Activated naive CD8-positive, alpha-beta T cell treated with anti-CD3 and anti-CD28 coated beads, Interleukin-2, amount 10 ng/mL, durations not matched to agents 7 days and 5 days (primary cell): ENCODE measurements at regions of chr4 and their contacts with region 1.

Region 1: DNA sequence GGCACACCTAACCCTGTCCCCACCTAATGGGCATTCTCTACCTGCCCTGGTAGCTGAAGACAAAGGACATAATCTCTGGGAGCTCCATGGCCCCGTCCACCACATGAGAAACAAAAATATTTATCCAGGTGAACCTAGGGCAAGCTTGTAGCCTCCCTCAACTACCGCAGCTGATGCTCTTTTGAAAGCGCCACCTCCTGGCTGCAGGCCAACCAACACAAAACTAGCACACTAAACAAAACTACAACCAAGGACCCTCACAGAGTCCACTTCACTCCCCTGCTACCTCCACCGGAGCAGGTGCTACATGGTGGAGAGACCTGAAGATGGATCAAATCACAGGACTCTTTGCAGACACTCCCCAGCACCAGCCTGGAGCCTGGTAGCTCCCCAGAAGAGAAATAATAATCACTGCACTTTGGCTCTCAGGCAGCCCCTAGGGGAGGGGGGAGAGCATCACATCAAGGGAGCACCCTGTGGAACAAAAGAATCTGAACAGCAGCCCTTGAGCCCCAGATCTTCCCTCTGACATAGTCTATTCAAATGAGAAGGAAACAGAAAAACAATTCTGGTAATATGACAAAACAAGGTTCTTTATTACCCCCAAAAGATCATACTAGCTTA is 111.3 kb upstream of the ATP8A1 start:
- DNase-seq: peak; percentile 30
- ATAC-seq: no peak
- H3K4me3 Mint-ChIP-seq: no peak overlapping the region
- H3K27ac Mint-ChIP-seq: no peak overlapping the region
- H3K4me1 Mint-ChIP-seq: no peaks in the 10 kb centered on the region
- H3K27me3 Mint-ChIP-seq: no peaks in the 10 kb centered on the region

Region 2: GRCh38 chr4:42555828-42556227 is 212.4 kb before region 1 on chr4:
- POLR2A ChIA-PET with region 1: no interaction called
- DNase-seq: no peak
- ATAC-seq: no peak
- H3K4me3 Mint-ChIP-seq: no peak overlapping the region
- H3K27ac Mint-ChIP-seq: no peak overlapping the region
- H3K4me1 Mint-ChIP-seq: no peaks in the 10 kb centered on the region
- H3K27me3 Mint-ChIP-seq: no peaks in the 10 kb centered on the region

Region 3: DNA sequence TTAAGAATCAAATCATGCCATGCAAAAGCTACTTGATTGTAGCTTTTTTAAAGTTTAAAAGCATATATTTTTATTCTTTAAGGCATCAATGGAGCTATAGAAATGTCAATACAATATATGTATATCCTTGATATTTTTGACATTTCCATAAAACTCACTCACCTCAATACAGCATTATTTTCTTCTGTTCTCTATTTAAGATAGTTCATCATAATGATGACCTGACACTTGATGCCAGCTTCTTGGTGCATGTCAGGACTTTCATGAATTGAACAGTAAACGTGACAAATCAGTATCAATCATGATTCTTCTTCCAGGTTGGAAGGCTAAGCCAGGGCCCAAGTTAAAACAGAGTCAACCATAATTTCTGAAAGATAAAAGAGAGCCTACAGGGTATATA is 77.7 kb before region 1 on chr4:
- POLR2A ChIA-PET with region 1: no interaction called
- DNase-seq: no peak
- ATAC-seq: no peak
- H3K4me3 Mint-ChIP-seq: no peak overlapping the region
- H3K27ac Mint-ChIP-seq: no peak overlapping the region
- H3K4me1 Mint-ChIP-seq: no peaks in the 10 kb centered on the region
- H3K27me3 Mint-ChIP-seq: no peaks in the 10 kb centered on the region

Region 4: GRCh38 chr4:42816189-42816879 is 48.1 kb after region 1 on chr4:
- POLR2A ChIA-PET with region 1: interaction called, 10 read pairs
- DNase-seq: no peak
- ATAC-seq: no peak
- H3K4me3 Mint-ChIP-seq: no peak overlapping the region
- H3K27ac Mint-ChIP-seq: no peak overlapping the region
- H3K4me1 Mint-ChIP-seq: no peaks in the 10 kb centered on the region
- H3K27me3 Mint-ChIP-seq: peaks cover 1% of the 10 kb centered on the region